A673 (cell line): ENCODE measurements at regions of chr9 and their contacts with region 1.

Region 1: GRCh38 chr9:129380961-129381401 is 202.9 kb upstream of the IER5L start:
- DNase-seq: no peak
- H3K4me3 ChIP-seq: no peak overlapping the region
- H3K27ac ChIP-seq: no peak overlapping the region
- H3K4me1 ChIP-seq: peaks cover 10% of the 10 kb centered on the region
- H3K27me3 ChIP-seq: no peaks in the 10 kb centered on the region
- CTCF ChIP-seq: no peak

Region 2: GRCh38 chr9:128718047-128718446 is 662.9 kb before region 1 on chr9:
- CTCF ChIA-PET with region 1: no interaction called
- POLR2A ChIA-PET with region 1: interaction called, 10 read pairs
- intact Hi-C with region 1: no loop called
- DNase-seq: no peak
- H3K4me3 ChIP-seq: no peak overlapping the region
- H3K27ac ChIP-seq: no peak overlapping the region
- H3K4me1 ChIP-seq: no peaks in the 10 kb centered on the region
- H3K27me3 ChIP-seq: no peaks in the 10 kb centered on the region
- CTCF ChIP-seq: no peak

Region 3: GRCh38 chr9:129359162-129359811 is 21.7 kb before region 1 on chr9:
- CTCF ChIA-PET with region 1: interaction called, 11 read pairs
- POLR2A ChIA-PET with region 1: no interaction called
- intact Hi-C with region 1: no loop called
- DNase-seq: no peak
- H3K4me3 ChIP-seq: no peak overlapping the region
- H3K27ac ChIP-seq: no peak overlapping the region
- H3K4me1 ChIP-seq: peaks cover 5% of the 10 kb centered on the region
- H3K27me3 ChIP-seq: no peaks in the 10 kb centered on the region
- CTCF ChIP-seq: no peak